Activated CD4-positive, alpha-beta T cell treated with anti-CD3 and anti-CD28 coated beads for 36 hours (primary cell): ENCODE measurements at regions of chr19 and their contacts with region 1.

Region 1: DNA sequence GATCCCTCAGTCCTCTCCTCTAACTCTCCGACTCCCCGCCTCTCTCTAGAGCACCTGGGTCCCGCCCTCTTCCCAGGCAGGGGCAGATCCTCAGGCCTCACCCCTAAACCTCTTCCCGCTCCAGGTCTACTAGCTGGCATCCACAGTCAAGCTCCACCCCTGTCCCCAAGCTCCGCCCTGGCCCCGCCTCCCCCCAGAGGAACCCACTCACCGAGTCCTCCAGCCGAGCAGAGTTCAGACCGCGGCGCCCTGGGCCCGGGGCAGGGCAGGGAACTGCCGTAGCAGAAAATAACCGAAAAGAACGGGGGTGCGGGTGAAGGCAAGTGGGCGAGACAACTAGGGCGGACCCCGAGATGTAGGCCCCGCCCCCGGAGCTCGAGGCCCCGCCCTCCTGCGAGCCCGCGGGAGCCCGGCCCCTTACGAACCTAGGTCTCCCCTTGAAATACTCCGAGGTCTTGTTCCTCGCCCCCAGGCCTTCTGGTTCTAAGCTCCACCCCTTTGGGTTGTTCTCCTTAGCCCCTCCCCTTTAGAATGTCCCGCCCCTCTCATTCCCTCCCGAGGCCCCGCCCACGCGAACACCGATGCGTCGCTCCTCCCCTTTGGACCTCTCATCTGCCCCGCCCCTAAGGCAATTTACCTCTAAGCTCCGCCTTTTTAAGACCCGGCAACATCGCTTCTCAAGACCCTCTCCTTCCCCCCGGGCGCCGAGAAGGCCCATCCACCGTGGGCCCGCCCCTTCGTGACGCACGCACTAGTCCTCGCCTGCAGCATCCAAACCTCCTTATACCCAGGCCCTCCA is at the start of gene GGN:
- DNase-seq: peak; percentile 94
- ATAC-seq: peak; percentile 81
- H3K4me3 Mint-ChIP-seq: peak within 1 kb of the TSS; percentile 75
- H3K27ac Mint-ChIP-seq: peak within 1 kb of the TSS; percentile 76
- H3K4me1 Mint-ChIP-seq: peaks cover 26% of the 10 kb centered on the region
- H3K27me3 Mint-ChIP-seq: peaks cover 14% of the 10 kb centered on the region
- total RNA-seq, gene GGN: 0.30 to 0.51 TPM

Region 2: DNA sequence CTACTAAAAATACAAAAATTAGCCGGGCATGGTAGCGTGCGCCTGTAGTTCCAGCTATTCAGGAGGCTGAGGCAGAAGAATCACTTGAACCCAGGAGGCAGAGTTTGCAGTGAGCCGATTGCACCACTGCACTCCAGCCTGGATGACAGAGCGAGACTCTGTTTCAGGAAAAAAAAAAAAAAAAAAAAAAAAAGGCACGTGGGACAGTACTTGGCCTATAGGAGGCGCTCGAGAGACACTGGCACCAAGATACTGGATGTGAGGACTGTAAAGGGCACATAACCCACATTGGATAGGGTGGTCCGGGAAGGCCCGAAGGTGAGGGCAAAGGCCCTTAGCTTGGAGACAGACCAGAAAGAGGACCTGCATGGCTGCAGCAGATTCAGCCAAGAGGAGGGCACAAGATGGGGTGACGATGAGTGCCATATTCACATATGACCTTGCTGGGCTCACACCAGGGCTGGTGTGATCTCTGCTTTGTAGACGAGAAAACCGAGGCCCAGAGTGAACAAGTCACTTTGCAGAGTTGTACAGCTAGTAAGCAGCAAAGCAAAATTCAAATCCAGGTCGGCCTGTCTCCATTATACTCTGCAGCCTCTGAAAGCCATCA is 253.1 kb before region 1 on chr19:
- CTCF ChIA-PET with region 1: no interaction called
- POLR2A ChIA-PET with region 1: no interaction called
- intact Hi-C with region 1: no loop called
- DNase-seq: peak; percentile 63
- ATAC-seq: peak; percentile 26
- H3K4me3 Mint-ChIP-seq: no peak overlapping the region
- H3K27ac Mint-ChIP-seq: no peak overlapping the region
- H3K4me1 Mint-ChIP-seq: no peaks in the 10 kb centered on the region
- H3K27me3 Mint-ChIP-seq: no peaks in the 10 kb centered on the region

Region 3: GRCh38 chr19:38245826-38246498 is 141.8 kb before region 1 on chr19:
- CTCF ChIA-PET with region 1: no interaction called
- POLR2A ChIA-PET with region 1: no interaction called
- intact Hi-C with region 1: loop called in 1 of 2 experiments (anchors 5 kb)
- DNase-seq: no peak
- ATAC-seq: no peak
- H3K4me3 Mint-ChIP-seq: no peak overlapping the region
- H3K27ac Mint-ChIP-seq: no peak overlapping the region
- H3K4me1 Mint-ChIP-seq: peaks cover 3% of the 10 kb centered on the region
- H3K27me3 Mint-ChIP-seq: peaks cover 2% of the 10 kb centered on the region

Region 4: DNA sequence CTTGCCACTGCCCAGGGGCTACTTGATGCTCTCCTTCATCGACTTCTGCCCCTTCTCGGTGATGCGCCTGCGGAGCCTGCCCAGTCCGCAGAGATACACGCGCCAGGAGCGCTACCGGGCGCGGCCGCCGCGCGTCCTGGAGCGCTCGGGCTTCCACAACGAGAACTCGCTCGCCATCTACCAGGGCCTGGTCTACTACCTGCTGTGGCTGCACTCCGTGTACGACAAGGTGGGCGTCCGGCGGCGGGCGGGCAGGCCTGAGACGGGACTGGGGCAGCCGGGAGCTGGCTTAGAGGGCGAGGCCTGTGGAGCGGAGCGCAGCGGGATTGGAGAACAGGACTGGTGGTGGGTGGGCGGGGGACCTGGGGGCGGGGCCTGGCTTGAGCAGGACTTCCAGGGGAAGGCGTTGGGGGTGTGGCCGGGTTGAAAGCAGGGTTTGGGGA is 26.1 kb before region 1 on chr19:
- CTCF ChIA-PET with region 1: no interaction called
- POLR2A ChIA-PET with region 1: no interaction called
- intact Hi-C with region 1: loop called (anchors 1 to 2 kb)
- DNase-seq: peak; percentile 87
- ATAC-seq: peak; percentile 78
- H3K4me3 Mint-ChIP-seq: peak overlapping the region; percentile 76
- H3K27ac Mint-ChIP-seq: no peak overlapping the region
- H3K4me1 Mint-ChIP-seq: peaks cover 9% of the 10 kb centered on the region
- H3K27me3 Mint-ChIP-seq: peaks cover 22% of the 10 kb centered on the region

Region 5: DNA sequence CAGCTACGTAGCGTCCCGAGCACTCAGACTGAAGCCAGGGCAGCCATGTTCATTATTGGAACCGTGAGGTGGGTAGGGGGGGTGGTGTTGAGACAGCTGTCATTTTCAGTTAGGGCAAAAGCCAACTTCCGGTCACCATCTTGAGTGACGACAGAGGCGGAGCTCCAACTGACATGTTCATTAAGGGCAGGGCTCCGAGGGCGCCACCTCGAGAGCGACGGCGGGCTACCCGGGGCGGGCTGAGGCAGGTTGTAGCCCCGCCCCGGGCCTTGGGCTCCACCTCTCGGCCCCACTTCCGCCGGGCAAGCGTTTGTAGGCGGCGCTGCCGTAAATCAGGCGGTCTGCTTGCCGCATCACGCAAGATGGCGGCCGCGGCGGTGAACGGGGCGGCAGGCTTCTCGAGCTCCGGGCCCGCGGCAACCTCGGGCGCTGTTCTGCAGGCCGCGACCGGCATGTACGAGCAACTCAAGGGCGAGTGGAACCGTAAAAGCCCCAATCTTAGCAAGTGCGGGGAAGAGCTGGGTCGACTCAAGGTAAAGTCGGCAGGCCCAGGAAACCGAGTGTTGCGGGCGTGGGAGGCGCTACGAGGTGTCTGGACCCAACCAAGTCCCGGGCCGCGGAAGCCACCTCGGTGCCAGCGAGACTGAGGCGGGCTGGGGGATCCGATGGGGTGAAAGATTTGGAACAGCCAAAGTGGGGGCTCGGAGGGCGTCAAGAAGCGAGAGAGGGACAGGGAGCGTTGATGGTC is 13.1 kb before region 1 on chr19 and contains the start of gene PSMD8:
- CTCF ChIA-PET with region 1: interaction called, 11 read pairs
- POLR2A ChIA-PET with region 1: interaction called, 26 read pairs
- intact Hi-C with region 1: loop called (anchors 1 to 2 kb)
- DNase-seq: peak; percentile 99
- ATAC-seq: peak; percentile 99
- H3K4me3 Mint-ChIP-seq: peak within 1 kb of the TSS; percentile 97
- H3K27ac Mint-ChIP-seq: peak within 1 kb of the TSS; percentile 98
- H3K4me1 Mint-ChIP-seq: peaks cover 26% of the 10 kb centered on the region
- H3K27me3 Mint-ChIP-seq: peaks cover 5% of the 10 kb centered on the region
- total RNA-seq, gene PSMD8: 219 to 275 TPM

Region 6: DNA sequence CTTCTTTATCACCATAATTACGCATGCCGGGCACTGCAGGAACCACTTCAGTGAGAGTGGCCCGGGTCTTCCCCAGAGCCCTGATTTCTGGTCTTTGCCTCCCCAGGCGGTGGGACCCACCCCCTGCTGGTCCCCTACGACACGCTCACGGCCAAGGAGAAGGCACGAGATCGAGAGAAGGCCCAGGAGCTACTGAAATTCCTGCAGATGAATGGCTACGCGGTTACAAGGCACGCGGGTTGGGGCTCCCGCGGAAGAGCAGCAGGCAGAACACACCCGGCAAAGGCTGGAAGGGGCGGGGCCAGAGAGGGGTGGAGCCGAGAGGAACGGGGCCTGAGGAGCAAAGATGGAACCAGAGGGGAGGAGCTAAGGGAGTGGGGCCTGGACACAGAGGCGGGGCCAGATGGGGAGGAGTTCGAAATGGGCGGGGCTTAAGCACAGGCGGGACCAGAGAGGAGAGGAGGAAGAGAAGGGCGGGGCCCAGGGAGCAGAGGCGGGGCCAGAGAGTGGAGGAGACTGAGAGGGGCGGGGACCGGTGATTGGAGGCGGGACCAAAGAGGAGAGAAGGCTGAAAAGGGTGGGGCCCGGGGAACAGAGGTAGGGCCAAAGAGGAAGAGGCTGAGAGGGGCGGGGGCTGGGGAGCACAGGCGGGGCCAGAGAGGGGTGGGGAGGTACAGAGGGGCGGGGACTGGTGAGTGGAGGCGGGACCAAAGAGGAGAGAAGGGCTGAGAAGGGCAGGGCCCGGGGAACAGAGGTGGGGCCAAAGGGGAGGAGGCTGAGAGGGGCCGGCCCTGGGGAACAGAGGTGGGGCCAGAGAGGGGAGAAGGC is 119.2 kb after region 1 on chr19:
- CTCF ChIA-PET with region 1: no interaction called
- POLR2A ChIA-PET with region 1: no interaction called
- intact Hi-C with region 1: loop called in 1 of 2 experiments (anchors 1 kb)
- DNase-seq: peak; percentile 98
- ATAC-seq: peak; percentile 94
- H3K4me3 Mint-ChIP-seq: no peak overlapping the region
- H3K27ac Mint-ChIP-seq: no peak overlapping the region
- H3K4me1 Mint-ChIP-seq: peaks cover 6% of the 10 kb centered on the region
- H3K27me3 Mint-ChIP-seq: peaks cover 2% of the 10 kb centered on the region

Region 7: DNA sequence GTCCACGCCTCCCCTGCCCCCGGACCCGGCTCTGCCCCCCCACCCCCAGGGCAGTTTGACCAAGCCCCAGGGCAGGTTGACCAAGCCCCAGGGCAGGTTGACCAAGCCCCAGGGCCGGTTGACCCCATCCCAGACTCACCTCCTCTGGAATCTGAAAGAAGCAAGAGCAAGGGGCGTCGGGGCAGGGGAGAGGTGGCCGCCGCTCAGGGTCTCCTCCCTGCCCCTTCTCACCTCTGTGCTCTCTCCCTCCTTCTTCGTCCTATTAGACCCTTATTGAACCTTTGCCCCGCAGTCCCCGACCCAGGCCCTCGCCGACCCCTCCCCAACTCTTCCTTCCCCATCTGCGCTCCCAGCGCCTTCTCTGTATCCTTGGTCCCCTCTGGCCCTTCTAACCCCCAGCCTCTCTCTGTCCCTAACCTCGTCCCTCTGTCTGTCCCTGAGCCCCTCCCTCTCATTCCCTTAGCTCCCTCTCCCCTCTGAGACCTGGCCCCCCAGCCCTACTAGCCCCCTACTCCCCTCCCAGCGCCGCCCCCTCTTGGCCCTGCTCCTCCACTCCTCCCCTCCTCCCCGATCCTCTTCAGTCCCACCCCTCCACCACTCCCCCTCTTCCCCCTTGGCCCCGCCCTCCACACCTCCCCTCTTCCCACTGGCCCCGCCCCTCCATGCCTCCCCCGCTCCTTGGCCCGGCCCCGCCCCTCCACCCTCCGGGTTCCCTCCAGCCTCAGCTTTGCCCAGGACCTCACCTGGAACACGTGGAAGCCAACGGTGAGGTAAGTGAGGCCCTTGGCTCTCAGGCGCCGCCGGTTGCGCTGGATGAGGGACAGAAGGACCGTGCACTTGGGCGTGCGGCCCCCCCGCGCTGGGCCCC is 348.9 kb after region 1 on chr19:
- CTCF ChIA-PET with region 1: no interaction called
- POLR2A ChIA-PET with region 1: interaction called, 3 read pairs
- intact Hi-C with region 1: loop called in 1 of 2 experiments (anchors 5 kb)
- DNase-seq: peak; percentile 89
- ATAC-seq: peak; percentile 40
- H3K4me3 Mint-ChIP-seq: peak overlapping the region; percentile 60
- H3K27ac Mint-ChIP-seq: no peak overlapping the region
- H3K4me1 Mint-ChIP-seq: peaks cover 33% of the 10 kb centered on the region
- H3K27me3 Mint-ChIP-seq: peaks cover 7% of the 10 kb centered on the region

Region 8: DNA sequence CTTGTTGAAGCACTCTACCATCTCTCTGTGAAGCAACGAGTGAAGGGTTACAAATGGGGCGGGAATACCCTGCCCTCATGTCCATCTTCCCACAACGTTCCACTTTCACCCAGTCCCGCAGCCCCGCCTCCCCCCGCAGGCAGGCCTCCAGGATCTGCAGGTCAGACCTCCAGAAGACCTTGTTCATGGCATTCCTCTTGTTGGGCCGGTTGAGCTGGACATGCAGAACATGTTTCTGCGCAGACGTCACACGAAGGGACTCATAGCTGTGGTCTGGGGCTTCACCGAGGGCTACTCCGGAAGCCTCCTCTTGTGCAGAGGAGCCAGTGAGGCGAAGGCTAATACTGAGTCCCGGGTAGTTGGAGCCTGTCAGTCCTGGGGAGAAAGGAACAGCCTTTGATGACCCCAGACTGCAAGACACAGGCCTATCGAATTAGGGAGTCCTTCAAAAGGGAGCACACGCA is 443.4 kb after region 1 on chr19:
- CTCF ChIA-PET with region 1: no interaction called
- POLR2A ChIA-PET with region 1: no interaction called
- intact Hi-C with region 1: loop called in 1 of 2 experiments (anchors 5 kb)
- DNase-seq: peak; percentile 58
- ATAC-seq: peak; percentile 53
- H3K4me3 Mint-ChIP-seq: peak overlapping the region; percentile 87
- H3K27ac Mint-ChIP-seq: peak overlapping the region; percentile 83
- H3K4me1 Mint-ChIP-seq: peaks cover 25% of the 10 kb centered on the region
- H3K27me3 Mint-ChIP-seq: no peaks in the 10 kb centered on the region